Activated CD4-positive, alpha-beta T cell treated with anti-CD3 and anti-CD28 coated beads for 36 hours (primary cell): ENCODE measurements at regions of chr1 and their contacts with region 1.

Region 1: GRCh38 chr1:201114236-201115131 is 2.3 kb upstream of the CACNA1S start:
- DNase-seq: peak; percentile 88
- ATAC-seq: peak; percentile 94
- H3K4me3 Mint-ChIP-seq: peak overlapping the region; percentile 78
- H3K27ac Mint-ChIP-seq: peak overlapping the region; percentile 83
- H3K4me1 Mint-ChIP-seq: peaks cover 2% of the 10 kb centered on the region
- H3K27me3 Mint-ChIP-seq: no peaks in the 10 kb centered on the region

Region 2: DNA sequence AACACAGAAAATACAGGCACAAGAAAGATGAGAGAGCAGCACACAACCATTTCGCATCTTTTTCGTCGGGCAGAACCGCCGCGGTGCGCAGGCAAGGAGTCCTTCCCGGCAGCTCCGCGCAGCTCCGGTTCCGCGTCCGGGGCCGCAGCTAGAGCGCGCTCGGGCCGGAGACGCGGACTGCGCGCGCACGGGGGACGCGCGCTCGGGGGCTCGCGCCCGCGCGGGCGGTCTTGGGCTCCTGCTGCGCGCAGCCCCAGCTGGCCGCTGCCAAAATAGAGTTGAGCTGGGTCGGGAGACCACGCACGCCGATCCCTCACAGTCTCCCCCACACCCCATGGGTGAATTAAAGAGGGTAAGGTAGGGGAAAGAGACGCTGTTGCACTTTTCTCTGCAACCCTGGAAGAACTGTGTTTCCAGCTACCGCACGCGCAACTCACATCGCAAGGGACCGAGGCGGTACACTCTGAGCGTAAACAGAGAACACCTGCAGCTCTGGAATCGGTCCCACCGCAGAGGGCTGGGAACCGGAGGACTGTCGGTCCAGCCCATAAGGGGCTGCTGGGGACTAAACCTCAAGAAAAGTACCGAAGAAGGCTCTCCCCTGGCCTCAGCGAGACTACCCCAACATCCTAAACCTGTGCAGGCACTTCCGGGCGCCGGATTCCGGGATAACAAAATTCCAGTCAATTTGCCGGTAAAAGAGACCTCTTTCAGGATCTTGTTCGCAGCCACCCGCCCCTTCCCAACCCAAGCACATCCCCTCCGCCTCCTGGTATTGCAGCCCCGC is 1085.3 kb before region 1 on chr1:
- CTCF ChIA-PET with region 1: no interaction called
- POLR2A ChIA-PET with region 1: no interaction called
- intact Hi-C with region 1: no loop called
- DNase-seq: peak; percentile 44
- ATAC-seq: peak; percentile 56
- H3K4me3 Mint-ChIP-seq: peak overlapping the region; percentile 62
- H3K27ac Mint-ChIP-seq: no peak overlapping the region
- H3K4me1 Mint-ChIP-seq: peaks cover 10% of the 10 kb centered on the region
- H3K27me3 Mint-ChIP-seq: peaks cover 43% of the 10 kb centered on the region

Region 3: DNA sequence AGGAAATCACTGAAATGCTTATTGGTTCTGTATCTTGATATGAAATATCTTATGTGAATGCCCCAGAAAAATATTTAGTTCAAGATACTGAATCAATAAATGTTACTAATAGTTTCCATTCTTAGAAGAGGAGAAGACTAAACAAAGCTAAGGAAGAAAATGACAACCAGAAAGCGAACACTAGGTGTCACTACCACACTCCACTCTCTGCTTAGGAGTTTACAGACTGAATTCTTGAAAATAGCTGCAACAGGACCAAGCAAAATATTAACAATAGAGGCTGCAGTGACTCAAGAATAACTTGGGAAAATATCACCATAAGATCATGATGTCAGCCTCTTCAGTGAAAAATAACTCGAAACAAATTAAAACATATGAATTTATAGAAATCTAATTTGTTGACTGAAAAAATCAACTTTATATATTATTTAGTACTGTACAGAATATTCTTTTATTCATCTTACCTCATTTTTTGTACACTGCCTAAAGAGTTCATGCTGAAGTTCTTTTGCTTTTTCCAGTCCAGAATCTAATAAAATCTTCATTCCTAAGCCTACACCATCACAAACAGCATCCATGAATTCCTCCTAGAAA is 555.5 kb before region 1 on chr1:
- CTCF ChIA-PET with region 1: interaction called, 3 read pairs
- POLR2A ChIA-PET with region 1: no interaction called
- intact Hi-C with region 1: loop called in 1 of 2 experiments (anchors 5 kb)
- DNase-seq: peak; percentile 24
- ATAC-seq: peak; percentile 60
- H3K4me3 Mint-ChIP-seq: no peak overlapping the region
- H3K27ac Mint-ChIP-seq: no peak overlapping the region
- H3K4me1 Mint-ChIP-seq: peaks cover 10% of the 10 kb centered on the region
- H3K27me3 Mint-ChIP-seq: no peaks in the 10 kb centered on the region

Region 4: DNA sequence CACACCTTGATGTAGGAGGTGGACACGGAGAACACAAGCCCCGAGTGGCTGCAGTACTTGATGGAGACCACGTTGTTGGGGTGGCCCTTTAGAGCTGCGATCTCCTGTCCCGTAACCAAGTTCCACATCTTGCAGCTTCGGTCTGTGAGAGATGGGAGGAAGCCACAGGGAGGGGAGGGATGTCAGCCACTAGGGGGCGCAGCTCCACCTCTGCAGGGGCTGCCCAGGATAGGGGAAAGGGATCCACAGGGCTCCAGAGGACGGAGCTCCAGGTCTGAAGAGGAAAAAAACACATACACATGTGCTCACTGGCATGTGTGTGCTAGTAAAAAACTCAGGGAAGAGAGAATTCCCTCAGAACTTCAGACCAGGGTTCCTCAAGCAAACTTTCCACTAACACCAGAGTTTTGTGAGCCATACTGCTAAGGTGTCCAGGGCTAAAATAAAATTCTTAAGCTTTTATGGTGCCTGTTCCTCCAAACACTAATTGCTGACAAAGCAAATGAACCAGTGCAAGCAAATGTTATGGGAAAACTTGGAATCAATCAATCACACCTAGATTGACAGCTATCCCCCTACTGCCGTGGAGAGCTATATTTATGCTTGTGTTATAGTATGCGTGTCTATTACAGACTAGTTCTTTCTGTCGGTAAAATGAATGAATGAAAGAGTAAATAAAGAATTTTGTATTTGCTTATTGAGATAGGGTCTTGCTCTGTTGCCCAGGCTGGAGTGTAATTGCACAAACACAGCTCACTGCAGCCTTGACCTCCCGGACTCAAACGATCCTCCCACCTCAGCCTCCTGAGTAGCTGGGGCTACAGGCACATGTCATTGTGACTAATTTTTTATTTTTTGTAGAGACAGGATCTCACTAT is 134.7 kb before region 1 on chr1:
- CTCF ChIA-PET with region 1: interaction called, 19 read pairs
- POLR2A ChIA-PET with region 1: no interaction called
- intact Hi-C with region 1: no loop called
- DNase-seq: peak; percentile 86
- ATAC-seq: peak; percentile 69
- H3K4me3 Mint-ChIP-seq: no peak overlapping the region
- H3K27ac Mint-ChIP-seq: no peak overlapping the region
- H3K4me1 Mint-ChIP-seq: no peaks in the 10 kb centered on the region
- H3K27me3 Mint-ChIP-seq: no peaks in the 10 kb centered on the region

Region 5: GRCh38 chr1:201053158-201053860 is 61.2 kb before region 1 on chr1:
- CTCF ChIA-PET with region 1: interaction called, 8 read pairs
- POLR2A ChIA-PET with region 1: no interaction called
- intact Hi-C with region 1: loop called in 1 of 2 experiments (anchors 1 kb)
- DNase-seq: no peak
- ATAC-seq: no peak
- H3K4me3 Mint-ChIP-seq: no peak overlapping the region
- H3K27ac Mint-ChIP-seq: no peak overlapping the region
- H3K4me1 Mint-ChIP-seq: peaks cover 23% of the 10 kb centered on the region
- H3K27me3 Mint-ChIP-seq: no peaks in the 10 kb centered on the region

Region 6: GRCh38 chr1:201170533-201171062 is 56.1 kb after region 1 on chr1:
- CTCF ChIA-PET with region 1: interaction called, 4 read pairs
- POLR2A ChIA-PET with region 1: no interaction called
- intact Hi-C with region 1: loop called in 1 of 2 experiments (anchors 2 kb)
- DNase-seq: peak; percentile 92
- ATAC-seq: peak; percentile 83
- H3K4me3 Mint-ChIP-seq: peak overlapping the region; percentile 71
- H3K27ac Mint-ChIP-seq: peak overlapping the region; percentile 90
- H3K4me1 Mint-ChIP-seq: peaks cover 21% of the 10 kb centered on the region
- H3K27me3 Mint-ChIP-seq: peaks cover 15% of the 10 kb centered on the region